CD4-positive, alpha-beta memory T cell (primary cell): ENCODE measurements at regions of chr20 and their contacts with region 1.

Region 1: GRCh38 chr20:50070991-50071888 is 41.7 kb downstream of the UBE2V1 start:
- DNase-seq: peak; percentile 79 to 90 (median 83)
- H3K4me3 ChIP-seq: peak overlapping the region; percentile 0 to 34
- H3K4me3 Mint-ChIP-seq: peak overlapping the region; percentile 71 to 79 (median 74)
- H3K27ac ChIP-seq: no peak overlapping the region
- H3K27ac Mint-ChIP-seq: peak overlapping the region in 3 of 7 donors; percentile 40 to 84 (median 81)
- H3K4me1 ChIP-seq: peaks cover 6% of the 10 kb centered on the region
- H3K4me1 Mint-ChIP-seq: peaks cover 3 to 6% (median 5%) of the 10 kb centered on the region in 4 donors
- H3K27me3 ChIP-seq: no peaks in the 10 kb centered on the region
- H3K27me3 Mint-ChIP-seq: peaks cover 0 to 2% of the 10 kb centered on the region in 2 donors

Region 2: DNA sequence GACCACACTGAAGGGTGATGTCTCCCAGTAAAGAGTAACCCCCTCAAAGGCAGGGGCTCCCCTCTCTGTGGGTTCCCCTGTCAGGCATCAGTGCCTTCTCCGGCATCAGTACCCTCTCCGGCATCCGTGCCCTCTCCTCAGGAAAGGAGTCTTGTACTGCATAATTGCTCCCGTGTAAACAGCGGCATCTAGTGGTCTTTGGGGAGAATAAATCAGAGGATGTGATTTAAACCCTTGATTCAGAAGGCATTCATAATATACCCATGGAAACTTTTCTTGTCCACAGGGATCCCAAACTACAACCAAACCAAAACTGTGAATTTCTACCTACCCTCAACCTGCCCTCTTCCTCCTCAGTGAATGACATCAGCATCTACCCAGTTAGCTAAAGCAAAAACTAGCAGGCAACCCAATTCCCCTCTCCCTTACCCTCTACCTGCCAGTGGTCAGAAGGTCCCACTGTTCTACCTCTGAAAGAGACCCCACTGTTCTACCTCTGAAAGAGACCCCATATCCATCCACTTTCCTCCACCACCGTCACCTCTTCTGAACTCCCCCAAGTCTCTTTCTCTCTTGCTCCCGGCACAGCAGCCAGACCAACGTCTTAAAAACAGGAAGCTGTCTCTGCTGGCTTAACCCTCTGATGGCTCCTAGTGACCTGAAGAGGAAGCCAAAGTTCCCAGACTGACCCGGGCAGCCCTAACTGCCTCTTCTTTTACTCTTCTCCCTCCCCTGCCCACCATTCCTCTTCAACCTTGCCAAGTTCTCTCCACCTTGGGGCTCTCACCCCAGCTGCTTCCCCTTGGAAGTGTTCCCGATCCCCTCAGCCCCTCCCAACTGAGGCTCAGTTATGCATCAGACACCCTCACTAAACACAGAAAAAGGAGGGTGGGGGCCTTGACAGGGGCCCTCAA is 14.5 kb after region 1 on chr20:
- CTCF ChIA-PET with region 1: interaction called, 56 read pairs
- POLR2A ChIA-PET with region 1: interaction called, 3 read pairs
- intact Hi-C with region 1: no loop called
- DNase-seq: peak; percentile 39 to 53 (median 47)
- H3K4me3 ChIP-seq: peak overlapping the region in 1 of 2 donors; percentile 17
- H3K4me3 Mint-ChIP-seq: peak overlapping the region; percentile 82 to 91 (median 84)
- H3K27ac ChIP-seq: peak overlapping the region; percentile 27
- H3K27ac Mint-ChIP-seq: peak overlapping the region; percentile 44 to 92 (median 77)
- H3K4me1 ChIP-seq: peaks cover 17% of the 10 kb centered on the region
- H3K4me1 Mint-ChIP-seq: peaks cover 18 to 40% (median 28%) of the 10 kb centered on the region in 4 donors
- H3K27me3 ChIP-seq: no peaks in the 10 kb centered on the region
- H3K27me3 Mint-ChIP-seq: no peaks in the 10 kb centered on the region

Region 3: GRCh38 chr20:50095476-50096078 is 24.3 kb after region 1 on chr20:
- CTCF ChIA-PET with region 1: interaction called, 15 read pairs
- POLR2A ChIA-PET with region 1: no interaction called
- intact Hi-C with region 1: no loop called
- DNase-seq: no peak
- H3K4me3 ChIP-seq: no peak overlapping the region
- H3K4me3 Mint-ChIP-seq: no peak overlapping the region
- H3K27ac ChIP-seq: no peak overlapping the region
- H3K27ac Mint-ChIP-seq: peak overlapping the region in 1 of 7 donors; percentile 62
- H3K4me1 ChIP-seq: peaks cover 28% of the 10 kb centered on the region
- H3K4me1 Mint-ChIP-seq: peaks cover 28 to 34% (median 31%) of the 10 kb centered on the region in 4 donors
- H3K27me3 ChIP-seq: no peaks in the 10 kb centered on the region
- H3K27me3 Mint-ChIP-seq: no peaks in the 10 kb centered on the region

Region 4: DNA sequence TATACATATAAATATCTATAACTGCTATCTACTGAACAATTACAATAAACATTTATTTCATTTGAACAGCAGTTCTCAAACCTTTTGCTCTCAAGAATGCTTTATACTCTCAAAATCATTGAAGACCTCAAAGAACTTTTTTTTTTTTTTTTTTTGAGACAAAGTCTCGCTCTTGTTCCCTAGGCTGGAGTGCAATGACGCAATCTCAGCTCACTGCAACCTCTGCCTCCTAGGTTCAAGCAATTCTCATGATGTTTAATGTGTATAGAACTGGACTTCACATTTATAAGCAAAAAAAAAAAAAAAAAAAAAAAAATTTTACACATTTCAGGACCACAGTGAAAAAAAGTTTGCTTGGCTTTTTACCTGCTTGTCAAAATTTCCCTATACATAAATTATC is 30.0 kb after region 1 on chr20:
- CTCF ChIA-PET with region 1: interaction called, 15 read pairs
- POLR2A ChIA-PET with region 1: no interaction called
- intact Hi-C with region 1: no loop called
- DNase-seq: no peak
- H3K4me3 ChIP-seq: no peak overlapping the region
- H3K4me3 Mint-ChIP-seq: peak overlapping the region in 1 of 8 donors; percentile 61
- H3K27ac ChIP-seq: no peak overlapping the region
- H3K27ac Mint-ChIP-seq: peak overlapping the region in 4 of 7 donors; percentile 30 to 86 (median 42)
- H3K4me1 ChIP-seq: peaks cover 71% of the 10 kb centered on the region
- H3K4me1 Mint-ChIP-seq: peaks cover 40 to 68% (median 53%) of the 10 kb centered on the region in 4 donors
- H3K27me3 ChIP-seq: no peaks in the 10 kb centered on the region
- H3K27me3 Mint-ChIP-seq: no peaks in the 10 kb centered on the region